Ascending aorta (tissue), 2 donors: ENCODE measurements at regions of chr7 and their contacts with region 1.

Region 1: DNA sequence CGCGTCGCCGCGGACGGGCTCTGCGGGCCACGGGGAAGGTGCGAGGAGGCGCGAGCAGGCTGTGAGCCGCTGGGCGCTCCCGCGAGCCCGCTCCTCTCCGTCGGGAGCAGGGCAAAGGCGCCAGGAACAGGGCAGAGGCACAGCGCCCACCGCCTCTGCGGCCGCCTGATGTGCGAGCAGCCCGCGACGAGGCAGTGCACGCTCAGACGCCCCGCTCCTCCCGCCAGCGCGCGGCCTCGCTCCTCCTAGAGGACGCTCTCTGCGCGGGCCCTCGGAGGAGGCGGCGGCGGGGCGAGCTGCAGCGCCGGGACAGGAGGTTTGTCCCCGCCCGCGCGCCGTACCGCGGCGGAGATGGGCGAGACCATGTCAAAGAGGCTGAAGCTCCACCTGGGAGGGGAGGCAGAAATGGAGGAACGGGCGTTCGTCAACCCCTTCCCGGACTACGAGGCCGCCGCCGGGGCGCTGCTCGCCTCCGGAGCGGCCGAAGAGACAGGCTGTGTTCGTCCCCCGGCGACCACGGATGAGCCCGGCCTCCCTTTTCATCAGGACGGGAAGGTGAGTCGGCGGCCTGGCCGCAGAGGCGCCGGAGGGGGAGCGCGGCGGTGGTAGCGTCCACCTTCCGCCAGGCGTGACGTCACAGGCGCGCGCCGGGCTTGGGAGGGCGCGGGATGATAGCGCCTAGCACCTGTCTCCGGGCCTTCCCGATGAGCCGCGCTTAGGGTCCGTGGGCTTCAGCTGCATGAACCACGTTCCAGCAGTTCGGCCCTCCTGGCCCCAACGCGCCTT is 731 bp downstream of the LANCL2 start:
- DNase-seq: peak; percentile 70 to 97
- H3K4me3 ChIP-seq: peak overlapping the region; percentile 64 to 100
- H3K27ac ChIP-seq: peak overlapping the region; percentile 98 to 99
- H3K4me1 ChIP-seq: peaks cover 5 to 10% of the 10 kb centered on the region in 2 donors
- H3K27me3 ChIP-seq: no peaks in the 10 kb centered on the region
- CTCF ChIP-seq: peak in 2 of 3 experiments; percentile 21 to 44

Region 2: GRCh38 chr7:54758702-54759592 is 606.9 kb before region 1 on chr7 and contains the start of gene SEC61G:
- intact Hi-C with region 1: loop called (anchors 2 kb)
- DNase-seq: peak; percentile 89 to 98
- H3K4me3 ChIP-seq: peak within 1 kb of the TSS; percentile 78 to 92
- H3K27ac ChIP-seq: peak within 1 kb of the TSS; percentile 84 to 86
- H3K4me1 ChIP-seq: peaks cover 0 to 19% of the 10 kb centered on the region in 2 donors
- H3K27me3 ChIP-seq: no peaks in the 10 kb centered on the region
- CTCF ChIP-seq: peak in 1 of 3 experiments; percentile 12
- total RNA-seq, gene SEC61G: 166 TPM

Region 3: DNA sequence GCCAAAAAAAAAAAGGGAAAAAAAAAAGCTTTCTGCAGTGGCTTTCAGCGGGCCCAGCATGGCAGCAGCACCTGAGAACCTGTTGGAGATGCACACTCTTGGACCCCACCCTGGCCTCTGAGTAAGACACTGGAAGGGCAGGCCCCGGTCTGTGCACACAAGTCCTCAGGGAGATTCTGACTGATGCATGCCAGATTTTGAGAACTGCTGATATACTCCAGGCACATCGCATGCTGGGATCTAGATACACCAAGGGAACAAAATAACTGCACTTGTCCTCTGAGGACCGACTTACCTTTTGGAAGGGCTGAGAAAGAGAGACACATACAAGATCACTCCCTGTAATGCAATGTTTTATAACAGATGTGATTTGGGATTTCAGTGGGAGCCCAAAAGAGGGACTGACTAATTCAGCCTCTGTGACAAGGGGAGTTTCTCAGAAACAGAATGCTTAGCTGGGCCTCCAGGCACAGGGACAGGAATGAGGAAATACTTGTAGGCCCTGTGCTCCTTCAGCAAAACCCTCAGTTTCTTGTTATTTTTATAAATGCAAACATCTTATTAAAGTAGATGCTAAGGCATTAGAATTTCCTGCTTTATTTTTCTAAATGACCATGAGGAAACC is 338.9 kb before region 1 on chr7:
- intact Hi-C with region 1: loop called (anchors 5 kb)
- DNase-seq: no peak
- H3K4me3 ChIP-seq: no peak overlapping the region
- H3K27ac ChIP-seq: peak overlapping the region; percentile 60 to 70
- H3K4me1 ChIP-seq: peaks cover 16 to 61% of the 10 kb centered on the region in 2 donors
- H3K27me3 ChIP-seq: no peaks in the 10 kb centered on the region
- CTCF ChIP-seq: no peak

Region 4: DNA sequence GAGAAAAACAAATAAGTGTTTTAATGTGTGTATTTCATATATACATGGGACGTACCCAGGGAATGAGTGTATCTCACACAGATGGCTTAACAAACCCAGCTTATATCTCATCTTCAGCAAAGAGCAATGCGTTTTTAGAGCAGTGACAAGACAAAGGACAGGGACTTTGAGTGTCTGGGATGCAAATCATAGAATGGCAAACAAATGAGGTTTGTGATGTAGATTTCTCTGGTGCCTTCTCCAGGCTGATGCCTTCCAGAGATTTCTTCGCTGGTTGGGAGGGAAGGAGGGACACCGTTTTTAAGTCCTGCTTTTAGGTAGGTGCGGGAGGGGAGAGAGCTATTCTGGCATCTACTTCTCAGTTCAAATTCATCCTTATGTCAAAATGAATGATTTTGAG is 15.8 kb after region 1 on chr7:
- intact Hi-C with region 1: no loop called
- DNase-seq: no peak
- H3K4me3 ChIP-seq: no peak overlapping the region
- H3K27ac ChIP-seq: no peak overlapping the region
- H3K4me1 ChIP-seq: no peaks in the 10 kb centered on the region
- H3K27me3 ChIP-seq: no peaks in the 10 kb centered on the region
- CTCF ChIP-seq: no peak

Region 5: DNA sequence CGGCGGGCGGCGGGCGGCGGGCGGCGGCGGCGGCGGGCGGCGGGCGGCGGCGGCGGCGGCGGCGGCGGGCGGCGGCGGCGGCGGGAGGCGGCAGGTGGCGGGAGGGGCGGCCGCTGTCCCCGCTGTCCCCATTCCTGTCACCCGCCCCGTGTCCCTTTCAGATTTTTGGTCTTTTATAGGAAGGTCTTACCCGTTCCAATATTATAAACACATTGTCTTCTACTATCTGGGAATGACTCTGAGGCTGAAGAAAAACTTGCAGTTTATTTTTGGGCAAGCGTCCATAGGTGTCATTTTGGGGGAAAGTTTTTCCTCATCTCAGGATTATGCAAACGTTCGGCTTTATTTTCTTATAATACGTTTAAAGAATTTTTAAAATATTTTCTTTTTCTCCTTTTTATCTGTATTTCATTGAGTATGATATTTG is 522.0 kb after region 1 on chr7:
- intact Hi-C with region 1: loop called (anchors 1 kb)
- DNase-seq: no peak
- H3K4me3 ChIP-seq: peak overlapping the region; percentile 59 to 75
- H3K27ac ChIP-seq: peak overlapping the region in 1 of 2 donors; percentile 65
- H3K4me1 ChIP-seq: peaks cover 0 to 8% of the 10 kb centered on the region in 2 donors
- H3K27me3 ChIP-seq: no peaks in the 10 kb centered on the region
- CTCF ChIP-seq: no peak

Region 6: DNA sequence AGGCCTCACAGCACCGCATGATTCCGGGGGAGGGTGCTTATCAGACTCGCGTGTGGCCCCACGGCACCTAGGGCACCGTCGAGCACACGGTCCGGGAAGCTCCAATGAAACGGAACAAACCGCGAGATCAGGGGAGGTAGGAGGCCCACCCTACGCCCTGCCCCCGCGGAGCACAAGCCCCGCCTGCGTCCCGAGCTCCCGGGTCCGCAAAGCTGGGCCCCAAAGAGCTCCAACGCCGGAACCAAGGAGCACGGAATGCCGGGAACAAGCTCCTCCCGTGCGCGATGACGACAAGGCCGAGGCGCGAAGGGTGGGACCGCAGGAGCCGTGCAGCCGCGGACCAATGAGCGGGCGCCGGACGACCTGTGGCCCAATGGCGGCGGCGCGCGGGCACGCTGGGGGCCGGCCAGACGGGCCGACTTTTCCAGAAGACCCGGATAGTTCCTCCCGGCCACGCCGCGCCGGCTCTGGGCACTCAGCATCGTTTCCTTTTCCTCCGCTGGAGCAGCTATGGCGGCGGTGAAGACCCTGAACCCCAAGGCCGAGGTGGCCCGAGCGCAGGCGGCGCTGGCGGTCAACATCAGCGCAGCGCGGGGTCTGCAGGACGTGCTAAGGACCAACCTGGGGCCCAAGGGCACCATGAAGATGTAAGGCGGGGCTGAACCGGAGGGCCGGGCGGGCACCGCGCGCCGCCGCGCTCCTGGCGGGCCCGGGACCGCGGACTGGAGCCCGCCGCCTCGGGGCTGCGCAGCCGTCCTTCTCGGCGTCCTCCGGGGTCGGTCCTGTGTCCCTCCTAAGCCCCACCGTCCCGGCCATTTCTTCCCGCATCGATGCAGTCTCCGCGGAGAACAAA is 685.7 kb after region 1 on chr7 and contains the starts of genes CCT6A and PSPH:
- intact Hi-C with region 1: loop called (anchors 5 kb)
- DNase-seq: peak; percentile 87 to 99
- H3K4me3 ChIP-seq: peak within 1 kb of the TSS; percentile 94
- H3K27ac ChIP-seq: peak within 1 kb of the TSS; percentile 92 to 95
- H3K4me1 ChIP-seq: peaks cover 0 to 26% of the 10 kb centered on the region in 2 donors
- H3K27me3 ChIP-seq: no peaks in the 10 kb centered on the region
- CTCF ChIP-seq: no peak
- total RNA-seq, gene CCT6A: 86.2 TPM
- total RNA-seq, gene PSPH: not detected